Activated naive CD4-positive, alpha-beta T cell treated with anti-CD3 and anti-CD28 coated beads for 36 hours (primary cell): ENCODE measurements at regions of chr13 and their contacts with region 1.

Region 1: DNA sequence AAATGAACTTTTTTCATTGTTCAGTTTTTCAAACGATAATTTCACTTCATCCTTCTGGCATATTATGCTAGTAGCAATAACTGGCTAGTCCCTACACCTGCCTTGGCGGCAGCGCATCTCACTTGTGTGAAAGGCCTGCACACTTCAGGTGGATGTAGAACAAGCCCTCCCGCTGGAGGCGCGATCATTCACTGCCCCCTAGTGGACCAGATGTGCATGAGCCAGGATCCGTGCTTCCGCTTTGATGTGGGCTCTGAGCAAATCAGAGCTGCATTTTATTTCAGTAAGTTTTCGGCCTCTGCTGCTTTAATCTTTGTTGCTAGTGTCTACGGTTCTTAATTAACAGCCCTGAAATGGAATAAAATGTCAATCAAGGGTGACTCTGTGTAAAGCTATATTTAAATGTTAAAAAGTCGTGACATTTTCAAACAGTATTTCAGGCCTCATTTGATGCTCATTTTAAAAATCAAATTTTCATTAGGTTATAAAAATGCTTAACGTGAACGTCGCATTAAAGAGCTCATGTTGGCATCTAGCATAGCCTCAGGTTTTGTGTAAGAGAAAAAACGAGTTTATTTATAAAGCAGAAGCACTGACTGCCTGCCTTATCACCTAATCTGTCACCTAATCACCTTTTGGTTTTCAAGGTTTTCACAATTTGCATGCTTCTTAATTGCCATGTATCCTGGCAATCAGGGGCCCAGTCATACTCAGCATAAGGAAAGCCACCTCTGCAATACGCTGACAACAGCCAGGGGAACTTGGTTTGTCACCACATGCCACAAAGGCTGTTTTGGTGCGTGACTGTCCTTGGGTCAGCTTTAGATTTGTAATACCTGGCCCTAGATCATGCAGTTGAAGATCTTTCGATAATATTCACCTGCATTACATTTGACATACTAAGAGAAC is 112.2 kb downstream of the TEX26 start:
- DNase-seq: peak; percentile 93
- H3K4me3 Mint-ChIP-seq: no peak overlapping the region
- H3K27ac Mint-ChIP-seq: peak overlapping the region; percentile 78
- H3K4me1 Mint-ChIP-seq: peaks cover 43% of the 10 kb centered on the region
- H3K27me3 Mint-ChIP-seq: peaks cover 2% of the 10 kb centered on the region

Region 2: DNA sequence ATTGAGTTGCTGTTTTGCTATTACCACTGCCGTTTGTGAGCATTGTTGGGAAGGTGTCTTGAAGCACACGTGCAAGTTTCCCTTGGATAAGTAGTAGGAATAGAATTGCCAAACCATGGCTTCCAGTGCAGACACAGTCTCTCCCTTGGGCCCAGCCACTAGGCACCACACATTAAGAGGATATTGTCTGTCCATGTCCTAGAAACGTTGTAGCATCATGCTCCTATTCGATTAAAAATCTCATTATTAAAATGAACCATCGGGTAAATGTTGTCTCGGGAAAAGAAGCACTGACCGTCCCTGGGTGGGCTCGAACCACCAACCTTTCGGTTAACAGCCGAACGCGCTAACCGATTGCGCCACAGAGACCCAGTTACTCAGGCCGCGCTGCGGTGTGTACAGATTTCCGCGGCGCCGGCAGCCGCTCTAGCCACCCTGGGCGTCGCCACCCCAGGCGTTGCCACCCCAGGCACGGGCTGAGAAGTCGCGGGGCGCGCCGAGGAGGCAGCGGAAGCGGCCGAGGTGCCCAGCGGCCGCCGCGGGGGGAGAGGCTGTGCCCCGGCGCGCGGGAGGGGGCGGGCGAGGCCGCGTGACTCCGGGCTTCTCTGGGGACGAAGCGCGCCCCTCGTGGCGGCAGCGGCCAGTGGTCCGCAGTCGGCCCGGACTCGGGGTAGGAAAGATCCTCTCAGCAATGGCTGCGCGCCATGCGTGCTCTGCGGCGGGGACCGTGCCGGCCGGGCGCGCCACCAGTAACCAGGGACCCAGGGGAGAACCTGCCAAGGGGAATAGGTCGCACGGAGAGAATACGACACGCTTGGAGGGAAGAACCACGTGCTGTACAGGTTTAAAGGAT is 370.7 kb before region 1 on chr13:
- CTCF ChIA-PET with region 1: no interaction called
- intact Hi-C with region 1: loop called (anchors 1 kb)
- DNase-seq: peak; percentile 84
- H3K4me3 Mint-ChIP-seq: peak overlapping the region; percentile 82
- H3K27ac Mint-ChIP-seq: peak overlapping the region; percentile 41
- H3K4me1 Mint-ChIP-seq: peaks cover 8% of the 10 kb centered on the region
- H3K27me3 Mint-ChIP-seq: no peaks in the 10 kb centered on the region

Region 3: DNA sequence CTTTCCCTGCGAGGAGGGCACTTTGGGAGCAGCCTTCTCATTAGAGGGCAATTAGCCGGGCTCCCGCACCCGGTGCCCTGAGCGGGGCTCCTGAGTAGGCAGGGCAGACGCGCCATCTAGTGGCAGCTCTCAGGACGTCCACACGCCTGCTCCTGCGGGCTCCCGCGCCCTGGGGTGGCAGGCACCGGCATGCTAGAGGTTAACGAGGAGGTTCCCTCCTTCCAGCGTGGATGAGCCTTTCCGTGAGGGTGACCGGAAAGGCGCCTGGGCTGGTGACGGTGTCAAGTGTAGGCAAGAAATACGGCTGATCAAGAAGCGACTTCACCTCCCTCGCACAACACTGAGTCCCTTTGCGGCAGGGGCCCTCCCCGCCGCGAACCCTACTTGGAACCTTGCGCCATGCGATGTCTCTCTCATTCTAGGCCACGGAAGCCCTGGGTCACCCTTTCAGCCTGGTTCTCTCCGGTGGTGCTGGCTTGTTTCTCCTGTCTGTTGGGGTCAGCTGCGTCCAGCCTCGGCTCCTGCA is 241.6 kb before region 1 on chr13:
- CTCF ChIA-PET with region 1: interaction called, 4 read pairs
- intact Hi-C with region 1: loop called (anchors 2 kb)
- DNase-seq: peak; percentile 88
- H3K4me3 Mint-ChIP-seq: peak overlapping the region; percentile 38
- H3K27ac Mint-ChIP-seq: no peak overlapping the region
- H3K4me1 Mint-ChIP-seq: peaks cover 5% of the 10 kb centered on the region
- H3K27me3 Mint-ChIP-seq: no peaks in the 10 kb centered on the region

Region 4: DNA sequence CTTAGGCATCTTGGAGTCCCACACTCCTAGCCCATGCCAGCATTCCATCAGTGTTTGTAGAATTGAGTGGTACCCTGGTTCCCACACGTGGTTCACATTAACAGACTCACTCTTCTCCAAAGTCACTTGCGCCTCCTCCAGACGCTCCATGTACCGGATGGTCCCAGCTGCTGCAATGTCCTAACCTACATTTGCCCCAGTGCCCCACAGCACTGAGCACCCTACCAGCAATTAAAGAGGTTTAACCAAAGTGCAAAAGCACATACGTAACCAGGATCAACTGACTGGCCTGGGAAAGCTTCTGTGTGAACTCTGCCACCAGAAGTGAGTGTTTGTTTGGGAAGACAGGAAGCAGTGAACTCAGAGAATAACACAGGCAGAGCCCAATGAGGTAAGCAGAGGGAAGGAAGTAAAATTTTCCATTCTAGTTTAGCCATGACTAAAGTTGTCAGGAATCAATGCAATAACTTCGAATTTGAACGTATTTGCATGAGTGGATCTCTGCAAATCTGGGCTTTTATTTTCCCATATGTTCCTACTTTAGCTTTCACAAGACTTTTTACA is 145.9 kb before region 1 on chr13:
- CTCF ChIA-PET with region 1: no interaction called
- intact Hi-C with region 1: loop called (anchors 1 kb)
- DNase-seq: peak; percentile 49
- H3K4me3 Mint-ChIP-seq: no peak overlapping the region
- H3K27ac Mint-ChIP-seq: peak overlapping the region; percentile 54
- H3K4me1 Mint-ChIP-seq: peaks cover 11% of the 10 kb centered on the region
- H3K27me3 Mint-ChIP-seq: peaks cover 13% of the 10 kb centered on the region

Region 5: DNA sequence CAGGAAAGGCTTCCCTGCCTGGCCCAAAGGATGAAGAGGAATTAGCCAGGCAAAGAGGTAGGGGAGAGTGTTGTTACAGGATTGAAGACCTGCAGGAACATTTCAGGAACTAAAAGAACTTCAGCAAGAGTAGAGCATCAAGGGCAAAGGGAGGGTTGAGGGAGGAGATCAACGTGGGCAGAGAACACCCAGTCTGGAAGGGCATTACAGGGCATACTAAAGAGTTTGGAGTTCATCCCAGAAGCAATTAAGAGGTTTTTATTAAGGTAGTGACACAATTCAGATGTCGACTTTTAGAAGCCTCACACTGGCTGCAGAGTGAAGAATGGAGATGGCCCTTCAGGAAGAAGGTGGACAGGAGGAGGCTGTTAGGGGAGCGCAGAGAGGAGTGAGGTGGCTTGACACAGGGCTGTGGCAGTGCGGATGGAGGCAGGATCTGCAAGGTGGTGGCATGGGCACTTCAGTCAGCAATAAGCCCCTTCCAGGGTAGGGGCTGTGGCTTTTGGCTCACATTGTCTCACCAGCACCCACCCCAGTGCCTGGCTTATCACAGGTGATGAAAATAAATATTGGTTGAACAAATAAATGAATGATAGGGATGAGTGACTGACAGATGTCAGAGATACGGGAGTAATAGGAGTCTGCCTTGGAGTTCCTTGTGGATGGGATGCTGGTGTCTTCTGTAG is 87.2 kb before region 1 on chr13:
- CTCF ChIA-PET with region 1: no interaction called
- intact Hi-C with region 1: no loop called
- DNase-seq: no peak
- H3K4me3 Mint-ChIP-seq: no peak overlapping the region
- H3K27ac Mint-ChIP-seq: no peak overlapping the region
- H3K4me1 Mint-ChIP-seq: no peaks in the 10 kb centered on the region
- H3K27me3 Mint-ChIP-seq: peaks cover 34% of the 10 kb centered on the region

Region 6: GRCh38 chr13:31073859-31074718 is 29.5 kb after region 1 on chr13:
- CTCF ChIA-PET with region 1: interaction called, 12 read pairs
- intact Hi-C with region 1: loop called (anchors 1 kb)
- DNase-seq: peak; percentile 70
- H3K4me3 Mint-ChIP-seq: no peak overlapping the region
- H3K27ac Mint-ChIP-seq: no peak overlapping the region
- H3K4me1 Mint-ChIP-seq: peaks cover 9% of the 10 kb centered on the region
- H3K27me3 Mint-ChIP-seq: peaks cover 3% of the 10 kb centered on the region